Caco-2 (cell line): ENCODE measurements at regions of chr5 and their contacts with region 1.

Region 1: DNA sequence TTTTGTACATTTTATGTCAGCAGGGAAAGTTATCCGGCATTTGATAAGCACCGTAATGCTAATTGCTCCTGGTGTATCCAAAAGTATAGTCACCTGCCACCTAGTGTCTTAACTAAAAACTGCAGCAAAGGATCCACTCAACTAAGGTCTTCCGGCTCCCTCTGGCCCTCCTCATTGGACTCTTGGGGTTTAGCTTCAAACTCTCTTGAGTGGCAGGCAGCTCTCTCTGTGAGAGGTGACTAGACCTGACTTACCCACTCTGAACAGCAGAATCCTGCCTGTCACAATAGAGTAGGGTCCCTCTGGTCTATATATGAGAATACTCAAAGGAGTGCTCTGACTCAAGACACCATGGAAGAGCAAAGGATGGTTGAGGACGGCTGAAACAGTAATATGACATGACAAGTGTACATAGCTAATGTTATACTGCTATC is 60.3 kb upstream of the CAST start:
- DNase-seq: peak; percentile 58 to 77
- H3K4me3 ChIP-seq: no peak overlapping the region
- H3K4me3 Mint-ChIP-seq: no peak overlapping the region
- H3K27ac Mint-ChIP-seq: no peak overlapping the region
- H3K4me1 ChIP-seq: no peaks in the 10 kb centered on the region
- H3K4me1 Mint-ChIP-seq: peaks cover 7% of the 10 kb centered on the region
- H3K27me3 ChIP-seq: no peaks in the 10 kb centered on the region
- H3K27me3 Mint-ChIP-seq: no peaks in the 10 kb centered on the region
- CTCF ChIP-seq: peak; percentile 82 to 86

Region 2: DNA sequence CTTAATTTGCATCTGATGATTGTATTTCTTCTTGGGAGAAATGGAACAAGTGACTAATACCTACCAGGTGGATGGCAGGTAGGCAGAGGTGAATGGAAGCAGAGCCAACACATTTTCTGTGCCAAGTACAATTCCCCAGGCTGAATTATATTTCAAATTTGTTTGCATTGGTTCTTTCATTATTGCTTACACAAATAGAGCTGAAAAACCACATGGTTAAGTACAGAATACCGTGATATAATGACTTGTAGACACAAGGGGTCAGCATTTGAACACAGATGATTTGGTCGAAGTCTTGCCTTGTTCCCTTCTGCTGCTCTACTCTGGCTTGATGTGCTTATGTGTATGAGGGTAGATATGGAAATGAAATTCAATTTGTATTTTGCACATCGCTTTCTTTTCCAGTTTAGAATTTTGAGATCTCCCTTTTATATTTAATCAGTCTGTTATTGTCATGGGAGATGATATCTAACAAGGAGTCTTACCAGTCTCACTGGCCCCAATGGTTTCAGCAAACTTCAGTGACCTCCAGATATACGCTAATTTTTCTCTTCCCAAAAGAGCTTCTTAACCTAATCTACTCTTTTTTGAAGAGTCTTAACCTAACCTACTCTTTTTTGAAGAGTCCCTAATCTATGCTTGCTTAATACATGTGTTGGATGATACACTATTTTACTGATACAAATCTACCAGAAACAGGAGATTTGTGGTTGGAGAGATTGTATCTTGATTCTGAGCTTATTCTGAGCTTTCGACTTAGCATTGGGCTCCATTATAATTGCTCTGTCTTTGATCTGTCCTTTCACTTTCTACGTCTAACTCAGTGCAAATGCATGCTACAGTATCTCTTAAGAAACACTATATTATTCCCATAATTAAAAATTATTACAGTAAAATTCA is 256.9 kb before region 1 on chr5:
- CTCF ChIA-PET with region 1: interaction called, 9 read pairs
- POLR2A ChIA-PET with region 1: no interaction called
- intact Hi-C with region 1: loop called (anchors 1 kb)
- DNase-seq: peak in 1 of 2 experiments; percentile 60
- H3K4me3 ChIP-seq: no peak overlapping the region
- H3K4me3 Mint-ChIP-seq: no peak overlapping the region
- H3K27ac Mint-ChIP-seq: no peak overlapping the region
- H3K4me1 ChIP-seq: peaks cover 8% of the 10 kb centered on the region
- H3K4me1 Mint-ChIP-seq: no peaks in the 10 kb centered on the region
- H3K27me3 ChIP-seq: no peaks in the 10 kb centered on the region
- H3K27me3 Mint-ChIP-seq: no peaks in the 10 kb centered on the region
- CTCF ChIP-seq: peak; percentile 52 to 57

Region 3: DNA sequence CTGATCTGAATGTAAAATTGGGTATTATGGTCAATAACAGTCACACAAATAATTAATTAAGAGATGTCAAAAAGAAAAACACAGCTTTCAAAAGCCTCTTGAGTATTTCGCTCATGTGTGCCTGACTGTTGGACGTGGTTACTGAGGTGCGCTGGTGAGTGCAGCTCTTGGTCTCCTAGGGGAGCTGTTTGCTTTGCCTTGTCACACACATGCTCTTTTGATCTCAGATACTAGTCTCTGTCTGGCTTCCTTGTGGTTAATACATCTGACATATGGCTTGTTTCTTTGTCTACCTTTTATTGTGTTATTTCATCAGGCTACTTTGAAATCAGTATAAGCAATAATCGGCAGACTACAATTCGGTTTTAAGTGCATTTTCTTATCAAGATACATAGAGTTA is 220.3 kb before region 1 on chr5:
- CTCF ChIA-PET with region 1: interaction called, 5 read pairs
- POLR2A ChIA-PET with region 1: no interaction called
- intact Hi-C with region 1: loop called (anchors 1 kb)
- DNase-seq: peak in 1 of 2 experiments; percentile 33
- H3K4me3 ChIP-seq: no peak overlapping the region
- H3K4me3 Mint-ChIP-seq: no peak overlapping the region
- H3K27ac Mint-ChIP-seq: no peak overlapping the region
- H3K4me1 ChIP-seq: no peaks in the 10 kb centered on the region
- H3K4me1 Mint-ChIP-seq: no peaks in the 10 kb centered on the region
- H3K27me3 ChIP-seq: no peaks in the 10 kb centered on the region; the same call in 1 of the 2 replicates
- H3K27me3 Mint-ChIP-seq: peaks cover 8% of the 10 kb centered on the region
- CTCF ChIP-seq: peak in 1 of 2 experiments; percentile 39

Region 4: GRCh38 chr5:96509721-96510333 is 92.0 kb before region 1 on chr5:
- CTCF ChIA-PET with region 1: no interaction called
- POLR2A ChIA-PET with region 1: no interaction called
- intact Hi-C with region 1: no loop called
- DNase-seq: no peak
- H3K4me3 ChIP-seq: no peak overlapping the region
- H3K4me3 Mint-ChIP-seq: no peak overlapping the region
- H3K27ac Mint-ChIP-seq: no peak overlapping the region
- H3K4me1 ChIP-seq: no peaks in the 10 kb centered on the region
- H3K4me1 Mint-ChIP-seq: no peaks in the 10 kb centered on the region
- H3K27me3 ChIP-seq: no peaks in the 10 kb centered on the region
- H3K27me3 Mint-ChIP-seq: peaks cover 5% of the 10 kb centered on the region
- CTCF ChIP-seq: no peak

Region 5: GRCh38 chr5:96562614-96563013 is 39.2 kb before region 1 on chr5:
- CTCF ChIA-PET with region 1: no interaction called
- POLR2A ChIA-PET with region 1: no interaction called
- intact Hi-C with region 1: no loop called
- DNase-seq: no peak
- H3K4me3 ChIP-seq: no peak overlapping the region
- H3K4me3 Mint-ChIP-seq: no peak overlapping the region
- H3K27ac Mint-ChIP-seq: no peak overlapping the region
- H3K4me1 ChIP-seq: no peaks in the 10 kb centered on the region
- H3K4me1 Mint-ChIP-seq: no peaks in the 10 kb centered on the region
- H3K27me3 ChIP-seq: peaks cover 2% of the 10 kb centered on the region; the same call in 1 of the 2 replicates
- H3K27me3 Mint-ChIP-seq: peaks cover 15% of the 10 kb centered on the region
- CTCF ChIP-seq: no peak